Colonic mucosa (tissue), 4 donors: ENCODE measurements at regions of chr7 and their contacts with region 1.

Region 1: DNA sequence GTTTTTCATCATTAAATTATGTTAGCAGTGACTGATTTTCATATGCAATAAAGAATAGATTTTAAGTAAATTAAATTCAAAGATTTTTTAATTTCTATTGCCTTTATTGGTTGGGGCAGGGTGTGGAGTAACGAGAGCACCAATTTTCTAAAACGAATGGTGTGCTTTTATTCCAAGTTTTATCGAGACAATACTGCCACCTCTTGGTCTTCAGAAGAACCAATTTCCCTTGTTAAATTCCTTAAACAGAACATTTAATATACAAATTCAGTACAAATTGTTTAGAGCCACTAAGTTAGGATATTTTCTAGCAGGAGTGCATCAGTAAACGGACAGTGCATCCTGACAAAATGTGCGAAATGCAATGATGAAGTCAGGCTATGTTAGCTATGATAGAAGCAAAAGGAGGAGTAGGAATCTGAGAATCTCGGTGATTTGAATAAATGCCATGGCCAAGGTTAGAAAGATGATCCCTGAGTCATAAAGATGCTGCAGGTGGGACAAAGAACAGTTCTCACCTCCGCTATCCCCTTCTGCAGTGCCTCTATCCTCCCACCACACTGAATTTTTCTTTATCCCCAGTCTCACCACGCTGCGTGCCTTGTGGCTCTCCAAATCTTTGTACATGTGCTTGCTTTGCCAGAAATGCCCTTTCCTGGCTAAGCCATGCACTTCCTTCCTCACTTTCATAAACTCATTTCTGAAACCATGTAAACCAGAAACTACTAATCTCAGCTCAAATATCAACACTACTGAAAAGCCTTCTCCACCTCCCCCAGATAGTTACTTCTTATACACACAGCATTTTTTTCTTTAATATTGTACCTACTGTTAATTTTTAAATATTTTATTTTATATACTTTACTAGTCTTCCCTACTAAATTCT is 31.9 kb upstream of the AGBL3 start:
- DNase-seq: no peak
- H3K4me3 ChIP-seq: no peak overlapping the region
- H3K27ac ChIP-seq: no peak overlapping the region
- H3K4me1 ChIP-seq: no peaks in the 10 kb centered on the region
- H3K27me3 ChIP-seq: no peaks in the 10 kb centered on the region
- CTCF ChIP-seq: no peak

Region 2: GRCh38 chr7:134632937-134633540 is 321.4 kb before region 1 on chr7:
- intact Hi-C with region 1: loop called (anchors 10 kb)
- DNase-seq: no peak
- H3K4me3 ChIP-seq: no peak overlapping the region
- H3K27ac ChIP-seq: no peak overlapping the region
- H3K4me1 ChIP-seq: no peaks in the 10 kb centered on the region
- H3K27me3 ChIP-seq: no peaks in the 10 kb centered on the region
- CTCF ChIP-seq: peak; percentile 43

Region 3: GRCh38 chr7:134690016-134690415 is 264.4 kb before region 1 on chr7:
- intact Hi-C with region 1: loop called (anchors 10 kb)
- DNase-seq: no peak
- H3K4me3 ChIP-seq: no peak overlapping the region
- H3K27ac ChIP-seq: peak overlapping the region; percentile 47
- H3K4me1 ChIP-seq: no peaks in the 10 kb centered on the region
- H3K27me3 ChIP-seq: no peaks in the 10 kb centered on the region
- CTCF ChIP-seq: no peak

Region 4: DNA sequence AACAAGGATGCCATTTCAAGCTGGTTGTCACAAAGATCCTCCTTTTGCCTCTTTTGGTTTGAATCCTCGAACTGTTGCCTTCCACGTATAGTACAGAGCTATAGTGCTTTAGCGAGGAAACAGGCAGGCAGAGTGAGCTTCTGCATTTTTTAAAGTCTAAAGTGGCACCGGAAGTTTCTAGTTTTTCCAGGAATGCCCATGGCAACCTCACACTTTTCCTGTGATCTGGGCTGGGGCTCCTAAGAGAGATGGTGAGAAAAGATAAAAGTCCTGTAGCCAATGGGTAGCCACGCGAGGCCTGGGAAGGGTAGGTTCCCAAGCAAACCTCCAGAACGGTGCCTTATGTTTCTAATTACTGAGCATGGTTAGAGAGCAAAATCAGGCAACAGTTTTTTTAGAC is 98.3 kb before region 1 on chr7:
- intact Hi-C with region 1: no loop called
- DNase-seq: no peak
- H3K4me3 ChIP-seq: no peak overlapping the region
- H3K27ac ChIP-seq: peak overlapping the region; percentile 12
- H3K4me1 ChIP-seq: no peaks in the 10 kb centered on the region
- H3K27me3 ChIP-seq: no peaks in the 10 kb centered on the region
- CTCF ChIP-seq: no peak